ENCODE measurements at regions of chr10 and their contacts with region 1.

Region 1: GRCh38 chr10:72319416-72320254 is 35.1 kb downstream of the DNAJB12 start:
- DNase-seq: peak; percentile 73
- H3K4me3 ChIP-seq: peak overlapping the region; percentile 50
- H3K27ac ChIP-seq: peak overlapping the region; percentile 100
- H3K27me3 ChIP-seq: no peaks in the 10 kb centered on the region
- CTCF ChIP-seq: no peak

Region 2: DNA sequence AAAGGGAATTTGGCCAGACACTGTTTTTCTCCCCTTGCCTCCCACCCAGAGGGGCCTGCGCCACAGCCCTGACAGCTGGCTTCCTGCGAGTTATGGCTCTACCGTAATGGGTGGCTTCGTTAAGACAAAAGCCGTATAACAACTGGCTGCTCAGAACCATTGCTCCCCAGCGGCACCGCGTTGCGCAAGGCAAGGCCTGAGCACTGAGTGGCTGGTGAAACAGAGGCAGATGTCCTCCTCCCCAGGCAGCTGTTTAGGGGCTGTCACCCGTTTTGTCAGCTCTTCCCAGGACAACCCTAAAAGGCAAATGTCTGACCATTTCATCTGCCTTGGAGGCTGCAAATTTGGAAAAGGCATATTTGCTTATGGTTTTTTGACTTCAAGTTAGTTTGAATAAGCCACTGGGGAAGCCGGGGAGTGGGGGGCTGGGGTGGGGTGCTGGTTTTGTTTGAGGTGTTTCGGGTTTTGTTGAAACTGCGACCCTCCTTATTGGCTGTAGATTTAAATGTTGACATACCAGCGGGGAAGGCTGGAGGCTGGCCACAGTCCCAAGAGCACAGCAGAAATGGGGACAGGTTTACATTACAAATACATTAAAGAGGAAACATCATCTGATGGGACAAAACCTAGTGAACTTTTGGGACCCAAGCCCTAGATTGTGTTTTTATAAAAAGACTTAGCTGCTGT is 230.6 kb before region 1 on chr10:
- CTCF ChIA-PET with region 1: no interaction called
- POLR2A ChIA-PET with region 1: no interaction called
- DNase-seq: no peak
- H3K4me3 ChIP-seq: no peak overlapping the region
- H3K27ac ChIP-seq: no peak overlapping the region
- H3K27me3 ChIP-seq: peaks cover 50% of the 10 kb centered on the region
- CTCF ChIP-seq: no peak

Region 3: GRCh38 chr10:72260588-72261322 is 58.9 kb before region 1 on chr10:
- CTCF ChIA-PET with region 1: no interaction called
- POLR2A ChIA-PET with region 1: interaction called, 10 read pairs
- DNase-seq: no peak
- H3K4me3 ChIP-seq: peak overlapping the region; percentile 54
- H3K27ac ChIP-seq: peak overlapping the region; percentile 84
- H3K27me3 ChIP-seq: no peaks in the 10 kb centered on the region
- CTCF ChIP-seq: 0 out of 2 replicates have a peak, but pooled peaks have one; percentile 10

Measured in AG04450 (cell line).